ENCODE measurements at regions of chr17 and their contacts with region 1.

Region 1: GRCh38 chr17:68035523-68036303 is at the start of gene KPNA2:
- H3K4me3 ChIP-seq: peak within 1 kb of the TSS; percentile 79
- H3K27ac ChIP-seq: peak within 1 kb of the TSS; percentile 93
- H3K4me1 ChIP-seq: peaks cover 11% of the 10 kb centered on the region; the same call in 1 of the 2 replicates
- CTCF ChIP-seq: no peak; the same call in 1 of the 2 replicates

Region 2: GRCh38 chr17:67647482-67647881 is 388.2 kb before region 1 on chr17:
- CTCF ChIA-PET with region 1: no interaction called
- POLR2A ChIA-PET with region 1: no interaction called
- H3K4me3 ChIP-seq: no peak overlapping the region
- H3K27ac ChIP-seq: no peak overlapping the region
- H3K4me1 ChIP-seq: no peaks in the 10 kb centered on the region
- CTCF ChIP-seq: no peak

Region 3: GRCh38 chr17:67993596-67994361 is 41.9 kb before region 1 on chr17:
- CTCF ChIA-PET with region 1: interaction called, 4 read pairs
- POLR2A ChIA-PET with region 1: interaction called, 13 read pairs
- H3K4me3 ChIP-seq: peak overlapping the region; percentile 74
- H3K27ac ChIP-seq: peak overlapping the region; percentile 99
- H3K4me1 ChIP-seq: peaks cover 20% of the 10 kb centered on the region
- CTCF ChIP-seq: peak; percentile 75

Region 4: DNA sequence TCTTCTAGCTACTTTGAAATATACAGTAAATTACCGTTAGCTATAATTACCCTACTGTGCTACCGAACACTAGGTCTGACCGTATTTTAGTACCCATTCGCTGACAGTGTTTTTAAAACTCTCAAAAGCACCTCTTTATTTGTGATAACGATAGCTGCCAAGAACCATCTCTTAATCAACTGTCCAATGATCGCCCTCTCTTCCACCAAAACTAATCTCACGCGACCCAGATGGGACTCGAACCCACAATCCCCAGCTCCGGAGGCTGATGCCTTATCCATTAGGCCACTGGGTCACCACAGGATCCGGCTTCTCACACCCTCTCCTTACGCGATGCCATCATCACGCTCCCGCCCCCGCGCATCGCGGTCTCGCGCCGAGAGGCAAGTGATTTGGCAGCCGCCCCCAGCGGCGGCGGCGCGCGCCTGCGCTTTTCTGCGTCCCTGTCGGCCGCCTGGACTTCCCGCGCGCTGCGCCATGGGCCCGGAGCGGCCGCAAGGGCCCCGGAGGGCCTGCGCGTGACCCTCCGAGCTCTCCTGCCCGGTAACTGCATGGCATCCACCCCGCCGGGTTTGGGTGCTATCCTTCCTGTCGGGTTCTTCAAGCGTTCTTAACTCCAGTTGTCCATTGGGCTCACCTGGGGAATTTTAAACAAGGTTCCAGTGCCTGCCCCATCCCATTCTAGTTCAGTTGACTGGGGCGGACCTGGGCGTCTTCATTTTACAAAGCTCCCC is 15.9 kb before region 1 on chr17:
- CTCF ChIA-PET with region 1: interaction called, 5 read pairs
- POLR2A ChIA-PET with region 1: interaction called, 40 read pairs
- H3K4me3 ChIP-seq: peak overlapping the region; percentile 47
- H3K27ac ChIP-seq: peak overlapping the region; percentile 80
- H3K4me1 ChIP-seq: no peaks in the 10 kb centered on the region; the same call in 1 of the 2 replicates
- CTCF ChIP-seq: peak; percentile 91

Region 5: GRCh38 chr17:68048996-68049395 is 13.3 kb after region 1 on chr17:
- CTCF ChIA-PET with region 1: interaction called, 5 read pairs
- POLR2A ChIA-PET with region 1: interaction called, 27 read pairs
- H3K4me3 ChIP-seq: no peak overlapping the region
- H3K27ac ChIP-seq: no peak overlapping the region
- H3K4me1 ChIP-seq: no peaks in the 10 kb centered on the region
- CTCF ChIP-seq: no peak